Mucosa of descending colon (tissue), 3 donors: ENCODE measurements at regions of chr1 and their contacts with region 1.

Region 1: DNA sequence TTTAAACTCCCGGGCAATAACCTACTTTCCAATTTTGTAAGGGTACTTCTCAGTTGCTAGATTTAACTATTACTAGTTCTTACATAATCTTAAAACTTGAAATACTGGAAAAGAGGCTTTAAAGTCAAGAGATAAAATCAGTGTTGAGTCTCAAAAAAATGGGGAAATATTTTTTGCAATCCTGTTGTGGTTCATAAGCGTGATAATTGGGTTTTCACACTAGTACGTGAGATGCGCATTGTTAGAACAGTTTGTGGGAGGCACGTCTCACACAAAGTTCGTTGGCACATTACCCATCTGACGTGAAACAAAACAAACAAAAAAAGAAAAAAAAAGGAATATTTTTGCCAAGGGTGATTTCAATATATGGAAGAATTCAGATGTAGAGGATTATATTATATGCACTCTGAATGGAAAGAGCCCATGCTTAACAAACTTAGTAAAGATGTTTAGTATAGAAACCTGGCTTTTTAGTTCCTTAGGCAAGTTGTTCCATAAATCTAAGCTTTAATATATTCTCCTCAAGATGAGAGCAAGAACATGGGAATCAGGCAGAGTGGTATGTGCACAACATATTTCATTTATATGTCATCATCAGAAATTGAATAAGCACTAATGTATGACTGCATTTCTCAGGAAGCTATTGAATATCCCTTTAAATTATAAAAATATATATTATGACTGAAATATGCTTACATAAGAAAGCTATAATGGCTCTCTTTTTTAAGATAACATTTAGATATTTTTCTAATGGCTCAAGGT is 73.9 kb upstream of the TNFSF4 start:
- DNase-seq: no peak
- ATAC-seq: no peak
- H3K4me3 ChIP-seq: no peak overlapping the region
- H3K4me1 ChIP-seq: no peaks in the 10 kb centered on the region
- CTCF ChIP-seq: no peak

Region 2: GRCh38 chr1:172837816-172838680 is 443.0 kb before region 1 on chr1:
- intact Hi-C with region 1: no loop called
- DNase-seq: no peak
- ATAC-seq: peak; percentile 74
- H3K4me3 ChIP-seq: no peak overlapping the region
- H3K4me1 ChIP-seq: peaks cover 4% of the 10 kb centered on the region
- CTCF ChIP-seq: no peak

Region 3: GRCh38 chr1:173224280-173224892 is 56.7 kb before region 1 on chr1:
- intact Hi-C with region 1: loop called in 1 of 2 experiments (anchors 10 kb)
- DNase-seq: no peak
- ATAC-seq: no peak
- H3K4me3 ChIP-seq: no peak overlapping the region
- H3K4me1 ChIP-seq: no peaks in the 10 kb centered on the region
- CTCF ChIP-seq: no peak

Region 4: DNA sequence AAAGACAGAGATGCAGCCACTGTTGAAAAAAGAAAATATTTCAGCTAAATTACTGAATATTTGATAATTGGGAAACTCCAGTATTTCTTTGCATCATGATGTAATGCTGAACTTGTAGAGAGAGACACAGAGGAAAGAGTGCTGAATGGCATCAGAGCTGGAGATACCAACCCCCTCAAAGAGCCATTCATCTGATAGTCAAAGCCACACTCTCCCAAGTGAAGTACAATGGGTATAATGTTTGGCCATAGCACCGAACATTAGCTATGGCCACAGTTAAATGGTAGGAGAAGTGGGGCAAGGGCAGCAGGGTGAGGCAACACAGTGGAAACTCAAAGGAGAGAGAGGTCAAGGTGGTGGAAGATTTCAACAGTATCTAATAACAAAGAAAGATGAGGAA is 33.6 kb after region 1 on chr1:
- intact Hi-C with region 1: no loop called
- DNase-seq: no peak
- ATAC-seq: no peak
- H3K4me3 ChIP-seq: no peak overlapping the region
- H3K4me1 ChIP-seq: no peaks in the 10 kb centered on the region
- CTCF ChIP-seq: no peak